GM13976 (cell line): ENCODE measurements at regions of chr12 and their contacts with region 1.

Region 1: DNA sequence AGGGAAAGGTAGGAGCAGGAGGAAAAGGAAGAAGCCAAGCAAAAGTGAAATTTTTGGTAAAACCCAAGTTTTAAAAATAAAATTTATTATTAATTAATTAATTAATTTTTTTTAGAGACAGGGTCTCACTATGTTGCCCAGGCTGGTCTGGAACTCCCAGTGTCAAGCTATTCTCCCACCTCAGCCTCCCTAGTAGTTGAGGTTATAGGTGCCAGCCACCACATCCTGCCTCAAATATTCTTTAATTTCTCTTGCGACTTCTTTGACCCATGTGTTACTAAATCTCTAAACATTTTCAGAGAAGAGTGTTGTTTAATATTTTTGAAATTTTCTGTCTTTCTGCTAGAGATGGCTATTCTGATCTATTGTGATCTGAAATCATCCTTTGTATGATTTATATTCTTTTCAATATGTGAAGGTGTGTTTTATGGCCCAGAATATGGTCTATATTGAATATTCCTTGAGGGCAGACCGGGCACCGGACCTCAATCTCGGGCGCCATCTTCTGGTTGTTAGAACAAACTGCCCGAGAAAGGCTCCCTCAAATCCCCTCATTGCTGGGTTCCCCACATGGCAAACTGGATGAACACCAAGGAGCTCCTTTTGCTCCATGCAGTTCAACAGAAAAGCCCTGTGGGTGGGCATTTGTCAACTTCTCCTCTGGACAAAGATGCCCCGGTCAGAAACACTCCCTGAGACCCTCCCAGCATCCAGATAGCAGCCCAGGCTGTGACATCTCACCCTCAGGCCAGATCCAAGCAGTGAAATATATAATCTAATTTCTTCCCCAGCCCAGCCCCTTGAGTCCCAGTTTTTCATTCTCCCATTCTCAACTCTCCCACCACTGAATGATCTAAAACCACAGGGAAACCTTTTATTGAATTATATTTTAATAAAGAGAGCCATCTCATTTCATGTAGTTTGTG is 110.5 kb downstream of the ASCL4 start:
- DNase-seq: peak; percentile 66
- CTCF ChIP-seq: peak; percentile 67

Region 2: GRCh38 chr12:107679336-107679735 is 205.7 kb before region 1 on chr12:
- in situ Hi-C with region 1: loop called (anchors 5 kb)
- DNase-seq: no peak
- CTCF ChIP-seq: no peak

Region 3: GRCh38 chr12:107760809-107761501 is 124.1 kb before region 1 on chr12 and contains the start of gene PRDM4:
- in situ Hi-C with region 1: loop called (anchors 10 kb)
- DNase-seq: peak; percentile 97
- CTCF ChIP-seq: peak; percentile 92

Region 4: GRCh38 chr12:108337235-108338223 is 452.5 kb after region 1 on chr12:
- in situ Hi-C with region 1: no loop called
- DNase-seq: peak; percentile 73
- CTCF ChIP-seq: peak; percentile 43